ENCODE measurements at regions of chr12 and their contacts with region 1.

Region 1: GRCh38 chr12:66688846-66689439 is 10.1 kb upstream of the GRIP1 start:
- DNase-seq: peak; percentile 48 to 54 (median 50)
- H3K4me3 ChIP-seq: no peak overlapping the region
- H3K27ac ChIP-seq: no peak overlapping the region
- H3K4me1 ChIP-seq: peaks cover 3 to 5% (median 3%) of the 10 kb centered on the region in 4 experiments
- H3K27me3 ChIP-seq: no peaks in the 10 kb centered on the region

Region 2: GRCh38 chr12:66279123-66279712 is 409.7 kb before region 1 on chr12:
- CTCF ChIA-PET with region 1: interaction called, 10 read pairs
- POLR2A ChIA-PET with region 1: no interaction called
- DNase-seq: peak; percentile 46 to 60 (median 54)
- H3K4me3 ChIP-seq: no peak overlapping the region
- H3K27ac ChIP-seq: no peak overlapping the region
- H3K4me1 ChIP-seq: peaks cover 0 to 14% (median 8%) of the 10 kb centered on the region in 4 experiments
- H3K27me3 ChIP-seq: no peaks in the 10 kb centered on the region

Region 3: DNA sequence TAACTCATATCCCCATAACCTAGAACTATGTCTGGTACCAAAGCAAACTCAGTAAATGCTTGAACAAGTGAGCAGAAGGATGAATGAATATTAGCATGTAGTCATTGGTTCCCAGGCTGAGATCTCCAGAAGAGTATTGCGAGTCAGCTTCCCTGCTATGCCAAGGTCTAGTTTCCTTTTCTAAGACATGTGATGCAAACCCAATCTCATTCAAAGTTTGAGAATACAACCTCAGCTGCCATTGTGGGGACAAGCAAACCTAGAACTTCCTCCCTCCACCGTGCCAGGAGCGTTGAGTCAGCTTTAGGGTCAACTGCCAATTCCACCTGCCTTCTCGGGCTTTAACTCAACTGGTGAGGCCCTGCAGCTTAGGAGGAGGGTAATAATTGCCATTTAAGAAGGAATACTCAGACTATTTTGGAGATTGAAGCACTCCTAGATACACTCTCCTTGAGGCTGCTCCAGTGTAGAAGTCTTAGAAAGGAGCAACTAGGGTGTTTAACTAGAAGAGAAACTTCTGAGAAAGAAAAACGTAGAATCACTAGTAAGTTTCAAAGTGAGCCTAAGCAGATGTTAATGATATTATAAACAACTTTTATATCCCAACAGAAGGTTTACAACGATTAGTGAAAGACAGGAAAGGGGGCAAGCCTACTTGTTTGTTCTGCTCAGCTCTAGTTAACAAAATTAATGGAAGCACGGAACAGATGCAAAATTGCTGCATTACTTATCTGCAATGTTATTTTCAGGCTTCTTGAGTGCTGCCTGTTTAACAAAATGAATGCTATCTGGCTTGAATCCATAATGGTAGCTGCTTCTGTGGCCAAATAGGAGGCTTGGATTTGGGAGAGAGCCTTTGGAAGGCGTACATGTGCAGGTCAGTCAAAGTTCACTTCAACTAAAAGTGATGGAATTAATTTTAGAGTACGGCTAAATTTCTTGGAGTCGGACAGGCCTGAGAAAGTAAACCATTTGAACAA is 289.7 kb before region 1 on chr12:
- CTCF ChIA-PET with region 1: no interaction called
- POLR2A ChIA-PET with region 1: no interaction called
- DNase-seq: peak in 2 of 3 donors; percentile 11 to 13
- H3K4me3 ChIP-seq: no peak overlapping the region
- H3K27ac ChIP-seq: no peak overlapping the region
- H3K4me1 ChIP-seq: no peaks in the 10 kb centered on the region
- H3K27me3 ChIP-seq: no peaks in the 10 kb centered on the region

Region 4: DNA sequence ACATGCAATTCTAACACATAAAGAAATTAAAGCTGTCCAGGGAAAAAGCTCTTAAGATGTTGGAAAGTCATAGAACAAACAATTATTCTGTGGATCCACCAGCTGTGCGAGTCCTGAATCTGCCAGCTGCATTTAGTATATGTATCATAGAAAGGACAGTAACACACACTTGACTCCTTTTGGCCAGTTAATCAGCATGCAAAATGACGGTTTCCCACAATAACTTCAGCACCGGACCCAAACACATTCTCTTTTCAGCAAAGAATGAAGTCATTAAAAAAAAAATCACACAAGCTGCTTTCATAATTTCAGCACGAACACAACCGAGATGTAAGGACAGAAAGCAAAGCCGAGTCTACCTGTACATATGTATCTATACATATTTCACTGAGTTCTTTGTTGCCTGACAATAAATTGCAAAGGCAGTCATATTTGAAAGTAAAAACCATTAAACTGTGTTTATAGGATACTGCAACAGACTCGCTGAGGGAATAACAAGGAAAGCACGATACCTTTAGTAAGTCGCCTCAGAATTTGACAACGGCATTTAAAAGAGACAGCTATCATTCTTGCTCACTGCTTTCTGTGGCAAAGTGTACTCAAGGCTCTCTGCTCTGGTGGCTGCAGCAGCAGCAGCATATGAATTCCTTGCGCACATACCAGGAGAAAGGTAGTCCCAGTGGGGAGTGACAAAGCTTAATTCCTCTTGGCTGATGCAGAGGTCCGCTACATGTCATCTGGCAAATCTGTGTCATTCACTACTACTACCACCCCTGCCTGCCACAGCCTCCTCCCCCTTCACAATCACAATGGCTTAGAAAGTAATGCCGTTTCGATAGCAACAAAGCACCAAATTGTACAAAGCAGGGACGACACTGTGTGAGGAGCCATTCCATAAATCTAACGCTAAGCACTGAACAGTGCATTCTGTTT is 10.3 kb before region 1 on chr12 and contains the start of gene GRIP1:
- CTCF ChIA-PET with region 1: interaction called, 11 read pairs
- POLR2A ChIA-PET with region 1: no interaction called
- DNase-seq: no peak
- H3K4me3 ChIP-seq: no peak within 1 kb of the TSS
- H3K27ac ChIP-seq: no peak within 1 kb of the TSS
- H3K4me1 ChIP-seq: no peaks in the 10 kb centered on the region
- H3K27me3 ChIP-seq: peaks cover 0 to 2% (median 0%) of the 10 kb centered on the region in 5 experiments

Region 5: DNA sequence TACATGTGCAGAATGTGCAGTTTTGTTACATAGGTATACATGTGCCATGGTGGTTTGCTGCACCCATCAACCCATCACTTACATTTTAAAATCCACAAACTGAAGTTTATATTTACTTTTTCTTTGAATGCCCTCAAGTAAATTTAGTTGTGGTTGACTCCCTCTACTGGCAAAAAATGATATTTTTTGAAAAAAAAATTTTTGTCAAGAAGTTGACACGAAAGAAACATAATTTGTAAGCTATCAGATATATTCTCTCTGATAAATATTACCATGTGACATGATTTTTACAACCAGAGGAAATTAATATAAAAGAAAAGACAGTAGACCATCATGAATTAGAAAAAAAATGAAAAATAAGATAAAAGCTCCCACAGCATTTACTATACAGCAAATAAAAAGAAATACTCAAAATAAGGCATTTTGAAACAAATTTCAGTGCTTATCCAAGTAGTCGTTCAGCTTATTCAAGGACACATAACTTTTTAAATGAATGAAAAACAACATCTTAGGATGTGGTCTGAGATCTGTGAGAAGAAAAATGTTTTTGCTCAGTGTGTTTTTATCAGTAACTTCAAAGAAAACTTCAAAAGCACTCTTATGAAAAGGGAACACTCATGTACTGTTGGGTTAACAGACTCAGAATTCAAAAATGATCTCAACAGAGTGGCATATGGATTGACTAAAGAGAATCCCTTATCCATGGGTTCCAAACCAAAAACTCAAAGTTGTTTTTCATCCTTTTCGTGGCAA is 19.9 kb after region 1 on chr12:
- CTCF ChIA-PET with region 1: interaction called, 21 read pairs
- POLR2A ChIA-PET with region 1: no interaction called
- DNase-seq: peak; percentile 27 to 59 (median 49)
- H3K4me3 ChIP-seq: no peak overlapping the region
- H3K27ac ChIP-seq: no peak overlapping the region
- H3K4me1 ChIP-seq: peaks cover 0 to 5% (median 0%) of the 10 kb centered on the region in 4 experiments
- H3K27me3 ChIP-seq: no peaks in the 10 kb centered on the region

Measured in common myeloid progenitor, CD34-positive (primary cell).